Panc1 (cell line): ENCODE measurements at regions of chr1 and their contacts with region 1.

Region 1: GRCh38 chr1:44316231-44316759 is 38.8 kb downstream of the ERI3 start:
- DNase-seq: no peak
- ATAC-seq: no peak
- H3K4me3 ChIP-seq: no peak overlapping the region
- H3K27ac ChIP-seq: no peak overlapping the region
- H3K4me1 ChIP-seq: no peaks in the 10 kb centered on the region
- H3K27me3 ChIP-seq: no peaks in the 10 kb centered on the region
- CTCF ChIP-seq: no peak

Region 2: GRCh38 chr1:44584167-44584566 is 267.9 kb after region 1 on chr1:
- CTCF ChIA-PET with region 1: no interaction called
- POLR2A ChIA-PET with region 1: interaction called, 14 read pairs
- in situ Hi-C with region 1: no loop called
- intact Hi-C with region 1: no loop called
- DNase-seq: no peak
- ATAC-seq: no peak
- H3K4me3 ChIP-seq: no peak overlapping the region
- H3K27ac ChIP-seq: no peak overlapping the region
- H3K4me1 ChIP-seq: peaks cover 17% of the 10 kb centered on the region
- H3K27me3 ChIP-seq: no peaks in the 10 kb centered on the region
- CTCF ChIP-seq: no peak